ENCODE measurements at regions of chr9 and their contacts with region 1.

Region 1: GRCh38 chr9:5437254-5438216 is at the start of gene PLGRKT:
- DNase-seq: peak; percentile 90
- H3K4me3 Mint-ChIP-seq: peak within 1 kb of the TSS; percentile 93
- H3K27ac Mint-ChIP-seq: peak within 1 kb of the TSS; percentile 93
- H3K4me1 Mint-ChIP-seq: peaks cover 66% of the 10 kb centered on the region
- H3K27me3 Mint-ChIP-seq: no peaks in the 10 kb centered on the region
- total RNA-seq, gene PLGRKT: 43.8 and 44.8 TPM in 2 replicates

Region 2: DNA sequence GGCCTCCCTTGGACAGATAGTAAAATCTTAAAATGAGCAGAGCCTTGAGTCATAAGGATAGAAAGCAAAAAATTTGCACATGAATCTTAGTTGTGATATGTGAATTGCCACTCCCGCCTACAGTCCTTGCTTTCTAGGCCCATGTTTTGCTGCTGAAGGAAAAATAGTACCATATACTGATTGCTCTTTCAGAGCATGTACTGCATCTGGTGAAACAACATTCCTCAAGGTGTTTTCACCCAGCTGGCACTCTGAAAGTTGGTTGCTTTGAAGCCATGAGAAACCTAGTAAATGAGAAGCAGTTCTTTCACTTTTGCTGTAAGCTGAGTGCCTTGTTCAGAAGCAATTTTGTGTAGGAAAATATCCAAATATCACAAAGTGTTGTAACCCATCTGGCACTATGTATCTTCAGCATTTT is 747.8 kb before region 1 on chr9:
- intact Hi-C with region 1: loop called (anchors 5 kb)
- DNase-seq: no peak
- H3K4me3 Mint-ChIP-seq: no peak overlapping the region
- H3K27ac Mint-ChIP-seq: no peak overlapping the region
- H3K4me1 Mint-ChIP-seq: peaks cover 31% of the 10 kb centered on the region
- H3K27me3 Mint-ChIP-seq: no peaks in the 10 kb centered on the region

Region 3: GRCh38 chr9:4832786-4833579 is 604.6 kb before region 1 on chr9:
- intact Hi-C with region 1: loop called (anchors 5 kb)
- DNase-seq: peak; percentile 48
- H3K4me3 Mint-ChIP-seq: peak overlapping the region; percentile 53
- H3K27ac Mint-ChIP-seq: peak overlapping the region; percentile 96
- H3K4me1 Mint-ChIP-seq: peaks cover 60% of the 10 kb centered on the region
- H3K27me3 Mint-ChIP-seq: no peaks in the 10 kb centered on the region

Region 4: GRCh38 chr9:5186416-5187169 is 250.9 kb before region 1 on chr9:
- intact Hi-C with region 1: loop called (anchors 1 kb)
- DNase-seq: peak; percentile 46
- H3K4me3 Mint-ChIP-seq: no peak overlapping the region
- H3K27ac Mint-ChIP-seq: no peak overlapping the region
- H3K4me1 Mint-ChIP-seq: peaks cover 24% of the 10 kb centered on the region
- H3K27me3 Mint-ChIP-seq: no peaks in the 10 kb centered on the region

Region 5: DNA sequence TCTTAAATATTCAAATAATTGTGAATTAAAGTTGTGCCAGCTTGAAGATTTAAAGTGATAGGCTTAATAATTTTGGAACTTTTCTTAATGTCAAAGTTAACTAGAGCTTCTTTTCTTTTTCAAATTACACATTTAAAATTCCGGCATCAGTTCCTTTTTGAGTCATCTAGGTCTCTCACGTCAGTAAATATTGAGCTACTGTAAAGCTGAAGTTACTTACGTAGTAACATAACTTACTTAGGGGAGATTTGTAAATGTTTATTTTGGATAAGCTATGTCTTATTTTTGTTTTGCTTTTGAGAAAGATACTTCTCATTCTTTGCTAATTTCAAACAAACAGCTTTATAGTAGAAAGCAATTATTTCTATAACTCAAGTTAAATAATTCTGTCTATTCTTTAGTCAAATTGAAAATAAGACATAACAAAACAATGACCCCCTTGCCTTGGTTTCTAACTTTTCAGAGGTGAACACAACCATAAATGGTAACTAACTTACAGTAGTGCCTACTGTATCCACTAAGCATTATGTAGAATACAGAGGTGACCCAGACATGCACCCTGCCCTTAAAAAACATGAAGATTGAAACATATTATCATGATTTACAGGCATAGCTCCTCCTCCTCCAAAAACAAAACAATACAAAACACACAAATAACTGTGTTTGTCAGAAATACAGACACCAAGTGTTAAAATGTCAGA is 42.6 kb after region 1 on chr9:
- intact Hi-C with region 1: no loop called
- DNase-seq: no peak
- H3K4me3 Mint-ChIP-seq: no peak overlapping the region
- H3K27ac Mint-ChIP-seq: no peak overlapping the region
- H3K4me1 Mint-ChIP-seq: peaks cover 13% of the 10 kb centered on the region
- H3K27me3 Mint-ChIP-seq: peaks cover 2% of the 10 kb centered on the region

Region 6: GRCh38 chr9:5510360-5510931 is 72.9 kb after region 1 on chr9 and contains the start of gene PDCD1LG2:
- intact Hi-C with region 1: loop called (anchors 1 kb)
- DNase-seq: peak; percentile 41
- H3K4me3 Mint-ChIP-seq: peak within 1 kb of the TSS; percentile 82
- H3K27ac Mint-ChIP-seq: peak within 1 kb of the TSS; percentile 96
- H3K4me1 Mint-ChIP-seq: peaks cover 68% of the 10 kb centered on the region
- H3K27me3 Mint-ChIP-seq: no peaks in the 10 kb centered on the region
- total RNA-seq, gene PDCD1LG2: 1.1 and 1.4 TPM in 2 replicates

Region 7: DNA sequence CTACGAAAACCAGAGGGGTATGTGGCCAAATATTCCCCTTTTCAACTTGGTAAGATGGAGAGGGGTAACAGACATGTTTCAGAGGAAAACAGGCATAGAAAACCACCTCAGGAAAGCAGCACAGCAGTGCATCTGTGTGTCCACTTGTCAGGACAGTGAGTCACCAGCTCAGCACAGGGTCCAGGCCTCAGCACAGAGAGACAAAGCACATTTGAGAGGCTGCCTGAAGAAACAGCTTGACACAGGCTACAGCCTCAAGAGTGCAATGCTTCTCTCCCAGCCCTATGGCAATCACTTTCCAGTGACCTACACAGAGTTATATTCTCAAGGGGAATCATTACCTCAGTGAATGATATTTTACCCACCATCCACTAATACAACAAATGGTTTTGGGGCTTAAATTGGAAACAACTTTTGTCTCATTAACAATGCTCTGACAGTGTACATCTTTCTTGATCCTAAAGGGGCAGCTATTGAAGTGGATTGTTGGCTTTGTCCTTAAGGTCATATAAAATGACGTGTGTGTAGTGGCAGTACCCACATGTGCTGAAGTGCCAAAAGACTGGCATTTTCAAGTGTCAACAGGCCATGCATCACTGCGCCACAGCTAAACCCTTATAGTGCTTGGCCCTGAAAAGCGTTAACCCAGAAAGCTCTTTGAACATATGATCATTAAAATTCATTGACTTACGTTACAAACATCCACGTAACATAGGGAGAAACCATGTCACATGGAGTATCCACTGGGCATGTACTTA is 349.0 kb after region 1 on chr9:
- intact Hi-C with region 1: loop called (anchors 10 kb)
- DNase-seq: no peak
- H3K4me3 Mint-ChIP-seq: no peak overlapping the region
- H3K27ac Mint-ChIP-seq: no peak overlapping the region
- H3K4me1 Mint-ChIP-seq: peaks cover 60% of the 10 kb centered on the region
- H3K27me3 Mint-ChIP-seq: no peaks in the 10 kb centered on the region

Measured in activated T-helper 1 cell treated with anti-CD3 and anti-CD28 coated beads, Interleukin-12 subunit alpha, Interleukin-12 subunit beta, Interleukin-2, Interleukin-4 antibody, amounts not matched to agents 30 ng/mL and 10 ng/mL and 1 ng/mL, durations not matched to agents 14 hours and 24 hours and 36 hours (primary cell).